Esophagus muscularis mucosa (tissue), 4 donors: ENCODE measurements at regions of chrX and their contacts with region 1.

Region 1: DNA sequence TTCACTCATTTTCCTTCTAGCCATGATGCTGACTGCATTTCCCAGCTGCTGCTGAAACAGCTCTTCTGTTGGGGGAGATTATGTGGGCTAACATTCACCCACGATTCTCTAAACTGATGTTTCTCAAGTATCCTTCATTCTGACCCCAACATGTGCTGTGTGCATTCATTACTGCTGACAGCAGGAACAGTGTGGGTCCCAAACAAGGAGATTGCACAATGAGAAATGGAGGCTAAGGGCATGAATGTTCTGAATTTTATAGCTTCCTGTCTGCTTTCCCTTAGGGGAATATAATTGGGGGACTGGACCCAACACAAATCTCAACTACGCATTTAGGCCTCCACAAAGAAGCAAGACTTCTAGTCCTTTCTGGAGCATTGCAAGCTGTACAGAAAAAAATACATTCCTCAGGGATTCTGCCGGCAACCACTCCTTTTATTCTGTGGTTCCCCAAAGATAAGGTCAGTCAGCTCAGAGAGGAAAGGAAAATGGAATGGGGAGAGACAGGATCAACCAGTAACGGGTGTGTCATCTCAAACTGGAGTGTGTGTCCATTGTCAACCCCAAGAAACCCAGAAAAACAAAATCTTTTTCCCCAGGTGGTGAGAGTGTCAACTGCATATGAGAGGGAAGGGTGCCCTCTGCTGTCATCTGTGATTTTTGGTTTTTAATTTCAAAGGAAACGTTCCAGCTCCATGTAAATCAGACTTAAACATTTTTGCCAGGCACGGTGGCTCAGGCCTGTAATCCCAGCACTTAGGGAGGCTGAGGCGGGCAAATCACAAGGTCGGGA is 81.5 kb upstream of the EGFL6 start:
- DNase-seq: no peak
- H3K4me3 ChIP-seq: no peak overlapping the region
- H3K27ac ChIP-seq: peak overlapping the region; percentile 65 to 83 (median 79)
- H3K4me1 ChIP-seq: peaks cover 0 to 34% (median 23%) of the 10 kb centered on the region in 4 donors
- H3K27me3 ChIP-seq: no peaks in the 10 kb centered on the region
- CTCF ChIP-seq: peak; percentile 54 to 73 (median 56)
- EP300 ChIP-seq: no peak
- POLR2A ChIP-seq: no peak

Region 2: DNA sequence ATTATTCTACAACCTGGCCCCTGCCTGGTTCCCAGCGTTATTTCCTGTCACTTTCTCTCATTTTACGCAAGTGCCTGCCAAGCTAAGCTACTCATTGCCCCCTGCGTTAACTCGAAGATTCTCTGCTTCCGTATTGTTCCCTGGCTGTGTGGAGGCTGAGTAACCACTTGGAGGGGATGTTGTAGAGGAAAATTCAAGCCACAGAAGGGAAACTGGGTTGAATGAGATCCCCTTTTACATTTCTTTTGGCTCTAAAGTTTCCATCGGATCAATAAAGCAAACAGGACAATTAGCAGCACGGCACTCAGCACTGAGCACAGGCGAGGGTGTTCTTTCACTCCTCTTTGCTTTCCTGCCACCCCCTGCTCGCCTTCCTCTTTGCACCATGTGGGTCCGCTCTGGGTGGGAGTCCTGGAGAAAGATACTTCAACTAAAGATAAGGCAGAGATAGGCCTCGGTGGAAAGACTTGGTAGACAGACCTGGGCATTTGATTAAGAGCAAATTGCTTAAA is 517.2 kb before region 1 on chrX:
- intact Hi-C with region 1: loop called (anchors 2 kb)
- DNase-seq: no peak
- H3K4me3 ChIP-seq: peak overlapping the region in 3 of 4 donors; percentile 14 to 22 (median 22)
- H3K27ac ChIP-seq: peak overlapping the region; percentile 71 to 96 (median 90)
- H3K4me1 ChIP-seq: peaks cover 0 to 36% (median 15%) of the 10 kb centered on the region in 4 donors
- H3K27me3 ChIP-seq: no peaks in the 10 kb centered on the region
- CTCF ChIP-seq: peak; percentile 46 to 69 (median 65)
- EP300 ChIP-seq: no peak
- POLR2A ChIP-seq: no peak

Region 3: DNA sequence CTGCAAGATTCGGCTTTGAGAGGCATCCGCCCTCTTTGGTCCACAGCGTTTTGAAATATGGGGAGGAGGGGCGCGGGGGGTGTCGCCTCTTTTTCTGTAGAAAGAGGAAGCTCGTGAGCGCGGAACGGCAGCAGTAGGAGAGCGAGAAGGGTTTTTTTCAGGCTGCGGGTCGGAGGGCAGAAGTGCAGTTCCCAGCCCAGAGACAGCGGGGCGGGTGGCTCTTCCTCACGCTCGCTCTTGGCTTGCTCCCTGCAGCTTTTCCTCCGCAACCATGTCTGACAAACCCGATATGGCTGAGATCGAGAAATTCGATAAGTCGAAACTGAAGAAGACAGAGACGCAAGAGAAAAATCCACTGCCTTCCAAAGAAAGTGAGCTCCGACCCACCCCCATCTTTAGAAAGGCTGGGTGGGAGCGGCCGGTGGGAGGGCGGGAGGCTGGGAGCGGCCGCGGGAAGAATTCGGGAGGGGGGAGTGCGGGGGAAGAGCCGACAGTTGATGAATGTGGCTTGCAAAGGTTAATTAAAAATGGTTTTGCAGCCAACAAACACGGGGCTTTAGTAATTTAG is 511.9 kb before region 1 on chrX:
- intact Hi-C with region 1: loop called (anchors 2 kb)
- DNase-seq: no peak
- H3K4me3 ChIP-seq: peak overlapping the region; percentile 61 to 83 (median 69)
- H3K27ac ChIP-seq: peak overlapping the region; percentile 86 to 96 (median 91)
- H3K4me1 ChIP-seq: peaks cover 0 to 47% (median 22%) of the 10 kb centered on the region in 4 donors
- H3K27me3 ChIP-seq: no peaks in the 10 kb centered on the region
- CTCF ChIP-seq: no peak
- EP300 ChIP-seq: no peak
- POLR2A ChIP-seq: peak; percentile 4

Region 4: GRCh38 chrX:13048280-13048679 is 439.6 kb before region 1 on chrX:
- intact Hi-C with region 1: no loop called
- DNase-seq: no peak
- H3K4me3 ChIP-seq: no peak overlapping the region
- H3K27ac ChIP-seq: no peak overlapping the region
- H3K4me1 ChIP-seq: peaks cover 0 to 20% (median 6%) of the 10 kb centered on the region in 4 donors
- H3K27me3 ChIP-seq: no peaks in the 10 kb centered on the region
- CTCF ChIP-seq: no peak
- EP300 ChIP-seq: no peak
- POLR2A ChIP-seq: no peak

Region 5: GRCh38 chrX:14026121-14026520 is 538.2 kb after region 1 on chrX:
- intact Hi-C with region 1: no loop called
- DNase-seq: no peak
- H3K4me3 ChIP-seq: no peak overlapping the region
- H3K27ac ChIP-seq: no peak overlapping the region
- H3K4me1 ChIP-seq: peaks cover 11 to 23% (median 20%) of the 10 kb centered on the region in 4 donors
- H3K27me3 ChIP-seq: no peaks in the 10 kb centered on the region
- CTCF ChIP-seq: no peak
- EP300 ChIP-seq: no peak
- POLR2A ChIP-seq: no peak

Region 6: GRCh38 chrX:14581081-14581480 is 1093.2 kb after region 1 on chrX:
- intact Hi-C with region 1: no loop called
- DNase-seq: no peak
- H3K4me3 ChIP-seq: no peak overlapping the region
- H3K27ac ChIP-seq: no peak overlapping the region
- H3K4me1 ChIP-seq: no peaks in the 10 kb centered on the region
- H3K27me3 ChIP-seq: no peaks in the 10 kb centered on the region
- CTCF ChIP-seq: no peak
- EP300 ChIP-seq: no peak
- POLR2A ChIP-seq: no peak